ENCODE measurements at regions of chr1 and their contacts with region 1.

Region 1: GRCh38 chr1:147890177-147890790 is 12.3 kb upstream of the GJA8 start:
- DNase-seq: peak; percentile 82 to 90
- H3K4me3 ChIP-seq: no peak overlapping the region
- H3K4me3 Mint-ChIP-seq: no peak overlapping the region
- H3K27ac Mint-ChIP-seq: no peak overlapping the region
- H3K4me1 ChIP-seq: no peaks in the 10 kb centered on the region
- H3K4me1 Mint-ChIP-seq: no peaks in the 10 kb centered on the region
- H3K27me3 ChIP-seq: no peaks in the 10 kb centered on the region
- H3K27me3 Mint-ChIP-seq: peaks cover 3% of the 10 kb centered on the region
- CTCF ChIP-seq: peak; percentile 88 to 96

Region 2: DNA sequence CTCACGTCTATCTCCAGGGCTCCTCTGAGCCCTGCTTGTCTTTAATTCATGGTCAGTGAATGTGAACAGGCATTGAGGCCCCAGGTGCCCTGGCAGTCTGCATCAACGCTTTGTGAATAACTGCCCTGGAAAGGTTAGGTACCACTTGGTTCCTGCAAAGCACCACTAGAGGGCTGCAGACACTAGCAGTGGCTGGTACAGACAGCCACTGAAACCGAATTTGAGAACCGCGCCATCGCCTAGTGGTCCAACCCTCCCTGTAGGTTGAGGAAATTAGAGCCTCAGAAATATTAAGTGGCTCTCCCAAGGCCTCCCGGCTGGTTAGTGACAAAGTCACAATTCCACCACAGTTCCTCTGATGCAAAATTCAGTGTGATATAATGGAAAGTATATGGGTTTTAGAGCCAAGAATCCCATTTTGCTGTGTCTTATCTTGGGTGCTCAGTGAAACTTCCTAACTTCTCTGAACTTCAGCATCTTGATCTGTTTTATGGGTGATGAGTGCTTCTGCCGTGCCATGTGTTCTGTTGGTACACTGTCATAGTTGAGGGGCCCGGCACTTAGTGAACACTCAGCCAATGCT is 395.2 kb before region 1 on chr1:
- CTCF ChIA-PET with region 1: no interaction called
- POLR2A ChIA-PET with region 1: no interaction called
- intact Hi-C with region 1: loop called (anchors 1 kb)
- DNase-seq: peak; percentile 68 to 76
- H3K4me3 ChIP-seq: no peak overlapping the region
- H3K4me3 Mint-ChIP-seq: no peak overlapping the region
- H3K27ac Mint-ChIP-seq: no peak overlapping the region
- H3K4me1 ChIP-seq: no peaks in the 10 kb centered on the region
- H3K4me1 Mint-ChIP-seq: no peaks in the 10 kb centered on the region
- H3K27me3 ChIP-seq: no peaks in the 10 kb centered on the region
- H3K27me3 Mint-ChIP-seq: no peaks in the 10 kb centered on the region
- CTCF ChIP-seq: peak; percentile 80 to 92

Region 3: DNA sequence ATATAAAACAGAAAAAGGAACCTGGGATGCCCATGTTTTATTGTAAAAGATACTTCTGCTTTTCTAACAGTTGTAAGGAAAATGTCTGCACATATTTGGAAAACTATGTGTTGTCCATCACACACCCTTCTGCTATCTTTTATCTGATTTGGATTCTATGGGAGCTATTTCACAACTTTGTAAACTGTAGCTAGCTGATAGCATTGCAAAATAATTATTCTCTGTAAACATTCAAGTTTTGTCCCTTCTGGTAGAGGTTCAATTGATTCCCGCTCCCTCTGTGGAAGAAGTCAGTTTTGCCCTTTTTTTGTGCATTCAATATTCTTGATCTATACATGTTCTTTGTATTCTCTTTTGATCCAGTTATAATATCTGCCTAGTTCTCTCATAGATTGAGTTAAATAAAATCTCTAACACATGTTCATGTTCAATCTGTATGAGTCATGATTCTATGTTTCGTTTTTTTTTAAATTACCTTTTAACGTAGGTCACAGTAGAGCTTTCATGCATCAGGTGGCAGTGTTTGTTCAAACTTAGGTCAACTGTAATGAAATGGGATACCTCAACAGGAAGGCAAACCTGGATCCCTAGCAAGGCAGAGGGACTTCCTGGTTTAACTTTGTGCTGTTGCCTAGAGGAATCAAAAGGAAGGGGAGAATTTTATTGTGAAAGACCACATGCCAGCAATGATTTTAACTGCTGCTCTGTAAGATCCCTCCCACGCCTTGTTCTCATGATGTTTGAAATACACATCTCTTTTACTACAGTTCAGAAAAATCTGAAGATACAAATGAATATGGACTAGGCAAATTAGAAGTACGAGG is 375.0 kb before region 1 on chr1:
- CTCF ChIA-PET with region 1: interaction called, 5 read pairs
- POLR2A ChIA-PET with region 1: no interaction called
- intact Hi-C with region 1: loop called (anchors 1 kb)
- DNase-seq: peak; percentile 66 to 71
- H3K4me3 ChIP-seq: no peak overlapping the region
- H3K4me3 Mint-ChIP-seq: no peak overlapping the region
- H3K27ac Mint-ChIP-seq: peak overlapping the region; percentile 36
- H3K4me1 ChIP-seq: peaks cover 23% of the 10 kb centered on the region
- H3K4me1 Mint-ChIP-seq: peaks cover 18% of the 10 kb centered on the region
- H3K27me3 ChIP-seq: no peaks in the 10 kb centered on the region
- H3K27me3 Mint-ChIP-seq: no peaks in the 10 kb centered on the region
- CTCF ChIP-seq: peak; percentile 30 to 32

Region 4: DNA sequence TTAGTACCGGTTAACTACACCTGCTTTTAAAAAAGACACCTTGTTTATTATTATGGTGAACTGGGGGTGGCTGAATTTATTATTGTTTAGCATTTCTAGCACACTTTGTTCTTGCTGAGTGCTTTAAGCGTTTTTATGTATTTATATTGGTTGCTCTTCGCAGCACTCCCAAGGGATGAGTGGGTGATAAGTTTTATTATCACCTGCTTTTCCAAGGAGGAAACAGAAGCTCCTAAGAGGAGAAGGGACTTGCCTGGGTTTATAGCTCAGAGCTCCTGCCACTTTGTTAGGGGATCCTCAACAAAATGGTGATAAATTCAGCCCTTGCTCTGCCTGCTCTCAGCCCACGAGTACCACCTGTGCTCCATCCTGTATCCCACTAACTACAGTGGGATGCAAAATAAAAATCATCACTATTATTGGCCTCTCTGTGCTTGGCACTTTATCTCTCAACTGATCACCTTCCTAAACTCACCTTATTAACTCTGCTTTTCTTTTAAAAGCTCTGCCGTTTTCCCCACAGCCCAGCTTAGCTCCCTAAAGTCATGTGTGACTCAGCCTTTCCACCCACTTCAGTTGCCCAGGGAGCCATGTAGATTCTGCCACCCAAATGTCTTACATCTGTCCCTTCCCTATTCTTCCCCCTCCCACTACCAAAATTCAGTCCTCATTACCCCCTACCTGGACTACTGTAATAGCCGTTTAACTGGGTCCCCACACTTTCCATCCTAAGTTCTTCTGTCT is 304.5 kb before region 1 on chr1:
- CTCF ChIA-PET with region 1: no interaction called
- POLR2A ChIA-PET with region 1: no interaction called
- intact Hi-C with region 1: no loop called
- DNase-seq: no peak
- H3K4me3 ChIP-seq: no peak overlapping the region
- H3K4me3 Mint-ChIP-seq: no peak overlapping the region
- H3K27ac Mint-ChIP-seq: no peak overlapping the region
- H3K4me1 ChIP-seq: peaks cover 19% of the 10 kb centered on the region
- H3K4me1 Mint-ChIP-seq: peaks cover 8% of the 10 kb centered on the region
- H3K27me3 ChIP-seq: no peaks in the 10 kb centered on the region
- H3K27me3 Mint-ChIP-seq: peaks cover 3% of the 10 kb centered on the region
- CTCF ChIP-seq: no peak

Region 5: GRCh38 chr1:147640553-147641165 is 249.6 kb before region 1 on chr1:
- CTCF ChIA-PET with region 1: interaction called, 3 read pairs
- POLR2A ChIA-PET with region 1: no interaction called
- intact Hi-C with region 1: loop called (anchors 1 kb)
- DNase-seq: peak; percentile 72 to 81
- H3K4me3 ChIP-seq: no peak overlapping the region
- H3K4me3 Mint-ChIP-seq: no peak overlapping the region
- H3K27ac Mint-ChIP-seq: no peak overlapping the region
- H3K4me1 ChIP-seq: peaks cover 18% of the 10 kb centered on the region
- H3K4me1 Mint-ChIP-seq: peaks cover 11% of the 10 kb centered on the region
- H3K27me3 ChIP-seq: no peaks in the 10 kb centered on the region
- H3K27me3 Mint-ChIP-seq: no peaks in the 10 kb centered on the region
- CTCF ChIP-seq: peak; percentile 83 to 91

Region 6: DNA sequence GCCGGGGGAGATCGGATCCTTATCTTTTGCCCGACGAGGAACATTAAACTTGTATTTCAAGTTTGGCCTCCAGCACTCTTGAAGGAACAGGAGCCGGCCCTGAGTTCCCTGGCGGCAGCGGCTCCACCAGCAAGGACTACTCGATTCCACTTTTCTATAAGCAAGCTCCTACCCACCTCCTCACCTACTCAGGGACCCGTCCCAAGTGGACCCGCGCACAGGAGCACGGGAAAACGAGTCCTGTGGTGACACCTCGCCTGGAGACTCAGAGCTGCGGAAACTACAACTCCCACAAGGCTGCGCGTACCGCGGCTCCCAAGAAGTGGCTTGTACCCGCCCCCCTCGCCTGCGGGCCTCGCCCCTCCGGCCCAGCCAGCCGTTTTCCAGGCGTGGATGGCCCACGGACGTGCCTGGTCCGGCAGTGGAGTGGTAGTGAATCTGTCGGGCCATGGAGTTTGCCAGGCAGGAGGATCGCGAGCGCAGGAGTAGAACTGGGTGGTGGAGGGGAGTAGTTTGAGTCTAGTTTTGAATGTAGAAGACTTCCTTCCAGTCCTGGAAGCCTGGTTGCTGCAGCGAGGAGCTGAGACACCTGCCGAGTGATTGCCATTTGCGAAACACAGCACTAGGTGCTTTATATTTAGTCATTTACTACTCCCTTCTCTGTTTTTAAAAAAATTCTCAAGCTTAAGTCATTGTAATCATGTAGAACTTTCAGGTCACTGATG is 219.8 kb before region 1 on chr1 and contains the start of gene ACP6:
- CTCF ChIA-PET with region 1: interaction called, 12 read pairs
- POLR2A ChIA-PET with region 1: no interaction called
- intact Hi-C with region 1: no loop called
- DNase-seq: peak; percentile 96 to 97
- H3K4me3 ChIP-seq: peak within 1 kb of the TSS; percentile 81
- H3K4me3 Mint-ChIP-seq: peak within 1 kb of the TSS; percentile 93
- H3K27ac Mint-ChIP-seq: peak within 1 kb of the TSS; percentile 86
- H3K4me1 ChIP-seq: peaks cover 7% of the 10 kb centered on the region; the same call in 1 of the 2 replicates
- H3K4me1 Mint-ChIP-seq: peaks cover 15% of the 10 kb centered on the region
- H3K27me3 ChIP-seq: no peaks in the 10 kb centered on the region
- H3K27me3 Mint-ChIP-seq: no peaks in the 10 kb centered on the region
- CTCF ChIP-seq: no peak
- total RNA-seq, gene ACP6: 24.6 and 26.7 TPM in 2 replicates

Region 7: GRCh38 chr1:147700042-147701006 is 190.0 kb before region 1 on chr1:
- CTCF ChIA-PET with region 1: interaction called, 4 read pairs
- POLR2A ChIA-PET with region 1: no interaction called
- intact Hi-C with region 1: loop called (anchors 2 kb)
- DNase-seq: peak; percentile 49 to 63
- H3K4me3 ChIP-seq: no peak overlapping the region
- H3K4me3 Mint-ChIP-seq: no peak overlapping the region
- H3K27ac Mint-ChIP-seq: no peak overlapping the region
- H3K4me1 ChIP-seq: no peaks in the 10 kb centered on the region
- H3K4me1 Mint-ChIP-seq: no peaks in the 10 kb centered on the region
- H3K27me3 ChIP-seq: no peaks in the 10 kb centered on the region
- H3K27me3 Mint-ChIP-seq: no peaks in the 10 kb centered on the region
- CTCF ChIP-seq: peak; percentile 83 to 88

Region 8: GRCh38 chr1:147723691-147724323 is 166.5 kb before region 1 on chr1:
- CTCF ChIA-PET with region 1: interaction called, 34 read pairs
- POLR2A ChIA-PET with region 1: no interaction called
- intact Hi-C with region 1: loop called (anchors 1 kb)
- DNase-seq: peak; percentile 70 to 74
- H3K4me3 ChIP-seq: no peak overlapping the region
- H3K4me3 Mint-ChIP-seq: no peak overlapping the region
- H3K27ac Mint-ChIP-seq: no peak overlapping the region
- H3K4me1 ChIP-seq: peaks cover 26% of the 10 kb centered on the region
- H3K4me1 Mint-ChIP-seq: peaks cover 21% of the 10 kb centered on the region
- H3K27me3 ChIP-seq: no peaks in the 10 kb centered on the region
- H3K27me3 Mint-ChIP-seq: no peaks in the 10 kb centered on the region
- CTCF ChIP-seq: peak; percentile 70 to 85

Measured in Caco-2 (cell line).